ENCODE measurements at regions of chr17 and their contacts with region 1.

Region 1: GRCh38 chr17:27800522-27800921 is at the start of gene NOS2:
- DNase-seq: no peak
- H3K4me3 ChIP-seq: no peak within 1 kb of the TSS
- H3K4me3 Mint-ChIP-seq: no peak within 1 kb of the TSS
- H3K27ac ChIP-seq: no peak within 1 kb of the TSS
- H3K27ac Mint-ChIP-seq: no peak within 1 kb of the TSS
- H3K4me1 ChIP-seq: no peaks in the 10 kb centered on the region
- H3K4me1 Mint-ChIP-seq: peaks cover 4% of the 10 kb centered on the region
- H3K27me3 ChIP-seq: peaks cover 4 to 5% of the 10 kb centered on the region in 2 donors
- H3K27me3 Mint-ChIP-seq: peaks cover 11 to 25% (median 15%) of the 10 kb centered on the region in 3 donors
- CTCF ChIP-seq: no peak
- polyA plus RNA-seq, gene NOS2: not detected

Region 2: DNA sequence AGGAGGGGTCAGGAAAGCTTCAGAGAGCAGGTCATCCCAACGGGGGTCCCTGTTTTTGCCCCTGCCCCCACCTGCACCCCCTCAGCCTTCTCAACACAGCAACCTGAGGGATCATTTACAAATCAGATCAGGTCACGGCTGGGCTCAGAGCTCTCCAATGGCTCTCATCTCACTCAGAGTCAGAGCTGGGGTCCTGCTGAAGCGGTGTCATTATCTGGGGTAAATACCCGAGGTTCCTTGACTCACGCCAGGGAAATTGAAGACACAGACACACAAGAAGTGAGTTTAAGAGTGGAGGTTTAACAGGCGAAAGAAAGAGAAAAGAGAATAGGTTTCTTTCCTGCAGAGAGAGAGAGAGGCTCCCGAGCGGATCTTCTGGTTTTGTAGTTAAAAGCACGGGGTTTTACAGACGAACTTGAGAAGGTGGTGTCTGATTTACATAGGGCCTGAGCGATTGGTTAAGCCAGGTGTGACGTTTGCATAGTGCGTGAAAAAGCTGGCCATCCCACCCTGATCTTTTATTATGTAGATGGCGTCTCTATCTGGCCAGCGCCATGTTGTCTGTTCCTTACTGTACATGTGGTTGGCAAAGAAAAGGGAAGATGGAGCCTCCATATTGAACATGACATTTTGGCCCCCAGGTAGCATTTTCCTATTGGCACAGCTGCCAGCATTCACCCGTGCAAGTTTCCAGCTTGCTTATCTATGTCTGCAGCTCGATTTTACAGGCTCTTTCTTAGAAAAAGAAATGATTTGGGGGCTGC is 455.2 kb before region 1 on chr17:
- intact Hi-C with region 1: no loop called
- DNase-seq: no peak
- H3K4me3 ChIP-seq: no peak overlapping the region
- H3K4me3 Mint-ChIP-seq: no peak overlapping the region
- H3K27ac ChIP-seq: no peak overlapping the region
- H3K27ac Mint-ChIP-seq: no peak overlapping the region
- H3K4me1 ChIP-seq: peaks cover 43 to 51% of the 10 kb centered on the region in 2 donors
- H3K4me1 Mint-ChIP-seq: peaks cover 46% of the 10 kb centered on the region
- H3K27me3 ChIP-seq: no peaks in the 10 kb centered on the region
- H3K27me3 Mint-ChIP-seq: peaks cover 0 to 3% (median 0%) of the 10 kb centered on the region in 3 donors
- CTCF ChIP-seq: no peak

Region 3: GRCh38 chr17:28247671-28248555 is 447.4 kb after region 1 on chr17:
- intact Hi-C with region 1: loop called in 1 of 2 experiments (anchors 5 kb)
- DNase-seq: no peak
- H3K4me3 ChIP-seq: no peak overlapping the region
- H3K4me3 Mint-ChIP-seq: no peak overlapping the region
- H3K27ac ChIP-seq: no peak overlapping the region
- H3K27ac Mint-ChIP-seq: peak overlapping the region in 1 of 7 donors; percentile 62
- H3K4me1 ChIP-seq: peaks cover 6% of the 10 kb centered on the region in 2 donors
- H3K4me1 Mint-ChIP-seq: peaks cover 8% of the 10 kb centered on the region
- H3K27me3 ChIP-seq: peaks cover 9 to 25% of the 10 kb centered on the region in 2 donors
- H3K27me3 Mint-ChIP-seq: peaks cover 20 to 43% (median 31%) of the 10 kb centered on the region in 3 donors
- CTCF ChIP-seq: no peak